Gastrocnemius medialis (tissue), 4 donors: ENCODE measurements at regions of chr14 and their contacts with region 1.

Region 1: DNA sequence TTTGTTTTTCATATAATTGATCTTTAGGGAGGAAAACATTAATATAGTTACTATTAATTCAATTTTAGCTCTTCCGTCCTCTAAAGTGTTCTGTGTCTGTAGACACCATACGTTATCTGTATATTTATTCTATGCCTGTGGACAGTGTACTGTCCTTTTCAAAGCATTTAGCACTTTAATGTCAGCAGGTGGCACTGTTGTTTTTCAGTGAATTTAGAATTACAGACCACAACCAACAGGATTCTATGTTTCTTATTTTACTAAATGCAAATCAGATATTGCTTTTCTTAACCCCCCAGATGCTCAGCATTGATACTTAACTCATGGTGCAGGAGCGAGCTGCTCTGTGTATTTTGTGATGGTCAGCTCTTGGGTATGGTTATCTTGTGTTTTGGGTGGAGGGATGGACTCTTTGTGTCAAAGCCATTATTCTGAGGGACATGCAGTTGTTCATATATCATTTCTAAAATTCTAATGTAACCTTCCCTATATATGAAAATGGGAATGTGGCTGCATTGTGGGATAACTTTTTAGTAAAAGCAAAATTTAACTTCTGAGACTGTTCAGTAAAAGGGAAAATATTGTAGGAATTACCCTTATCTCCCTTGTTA is 65.2 kb downstream of the PAPOLA start:
- DNase-seq: no peak
- ATAC-seq: no peak
- H3K4me3 ChIP-seq: no peak overlapping the region
- H3K27ac ChIP-seq: no peak overlapping the region
- H3K4me1 ChIP-seq: no peaks in the 10 kb centered on the region
- H3K27me3 ChIP-seq: no peaks in the 10 kb centered on the region
- CTCF ChIP-seq: peak in 1 of 5 experiments; percentile 15
- POLR2A ChIP-seq: no peak

Region 2: DNA sequence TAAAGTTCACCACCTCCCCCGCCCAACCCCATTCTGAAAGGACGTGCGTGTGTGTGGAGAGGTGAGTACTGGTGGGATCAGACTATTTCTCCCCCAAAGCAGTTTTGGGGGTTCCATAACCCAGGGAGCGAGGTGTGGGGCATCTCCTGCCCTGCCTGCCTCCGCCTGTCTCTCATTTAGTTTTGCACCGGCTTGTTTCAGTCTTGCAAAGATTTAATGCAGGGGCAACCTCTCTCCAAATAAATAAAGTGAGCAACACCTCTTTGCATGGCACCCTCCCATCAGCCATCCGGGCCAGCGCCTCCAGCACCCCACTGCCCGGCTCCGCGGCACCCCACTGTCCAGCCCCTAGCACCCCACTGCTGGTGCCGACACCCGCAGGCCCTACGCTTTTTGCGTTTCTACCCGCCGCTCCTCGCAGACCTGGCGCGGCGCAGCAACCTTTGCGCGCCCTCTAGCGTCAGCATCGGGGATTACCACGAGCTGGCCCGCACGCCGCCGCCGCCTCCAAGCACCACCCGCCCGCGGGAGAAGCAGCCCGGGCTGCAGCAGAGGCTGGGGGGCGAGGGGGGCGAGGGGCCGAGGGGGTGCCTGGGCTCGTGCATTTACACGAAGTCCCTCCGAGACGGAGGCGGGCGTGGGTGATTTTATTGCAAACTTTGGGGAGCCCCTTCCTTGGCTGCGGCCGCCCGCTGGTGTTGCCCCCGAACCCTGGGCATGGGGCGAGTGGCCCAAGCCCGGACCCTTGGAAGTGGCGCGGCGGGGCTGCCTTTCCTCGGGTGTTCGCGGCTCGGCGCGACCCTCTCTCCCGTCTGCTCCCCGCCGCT is 174.0 kb after region 1 on chr14:
- in situ Hi-C with region 1: loop called in 1 of 4 experiments (anchors 25 kb)
- intact Hi-C with region 1: loop called (anchors 5 kb)
- DNase-seq: peak in 1 of 2 donors; percentile 13
- ATAC-seq: peak in 1 of 2 donors; percentile 33
- H3K4me3 ChIP-seq: peak overlapping the region; percentile 34 to 53 (median 38)
- H3K27ac ChIP-seq: no peak overlapping the region
- H3K4me1 ChIP-seq: peaks cover 0 to 3% of the 10 kb centered on the region in 2 donors
- H3K27me3 ChIP-seq: peaks cover 46 to 58% (median 50%) of the 10 kb centered on the region in 3 donors
- CTCF ChIP-seq: peak; percentile 49 to 86 (median 62)
- POLR2A ChIP-seq: no peak